WTC11 (cell line): ENCODE measurements at regions of chr20 and their contacts with region 1.

Region 1: GRCh38 chr20:50929299-50930138 is 1.7 kb downstream of the ADNP start:
- DNase-seq: peak; percentile 94
- ATAC-seq: peak; percentile 79
- H3K4me3 Mint-ChIP-seq: peak overlapping the region; percentile 88
- H3K27ac Mint-ChIP-seq: peak overlapping the region; percentile 97
- H3K4me1 Mint-ChIP-seq: peaks cover 57% of the 10 kb centered on the region
- H3K27me3 Mint-ChIP-seq: no peaks in the 10 kb centered on the region
- CTCF ChIP-seq: peak; percentile 68

Region 2: DNA sequence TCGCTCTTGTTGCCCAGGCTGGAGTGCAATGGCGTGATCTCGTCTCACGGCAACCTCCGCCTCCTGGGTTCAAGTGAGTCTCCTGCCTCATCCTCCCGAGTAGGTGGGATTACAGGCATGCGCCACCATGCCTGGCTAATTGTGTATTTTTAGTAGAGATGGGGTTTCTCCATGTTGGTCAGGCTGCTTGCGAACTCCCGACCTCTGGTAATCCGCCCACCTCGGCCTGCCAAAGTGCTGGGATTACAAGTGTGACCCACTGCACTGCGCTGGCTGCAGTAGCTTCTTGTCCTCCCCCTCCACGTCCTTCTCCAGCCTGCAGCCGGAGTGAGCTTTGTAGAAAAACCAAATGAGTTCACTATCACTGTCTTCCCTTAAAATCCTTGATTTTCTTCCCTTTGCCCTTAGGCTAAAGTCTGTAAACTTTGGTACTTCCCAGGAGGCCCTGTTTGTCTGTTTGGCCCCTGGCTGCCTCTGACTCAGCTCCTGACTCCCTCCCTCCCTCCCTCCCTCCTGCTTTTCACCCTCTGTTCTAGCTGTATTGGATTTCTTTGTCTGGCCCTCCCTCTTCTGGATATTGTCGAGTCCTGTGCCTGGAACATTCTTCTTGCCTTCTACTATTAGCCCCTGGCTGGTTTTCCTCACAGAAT is 185.3 kb before region 1 on chr20:
- CTCF ChIA-PET with region 1: no interaction called
- POLR2A ChIA-PET with region 1: no interaction called
- DNase-seq: no peak
- ATAC-seq: peak; percentile 69
- H3K4me3 Mint-ChIP-seq: no peak overlapping the region
- H3K27ac Mint-ChIP-seq: peak overlapping the region; percentile 97
- H3K4me1 Mint-ChIP-seq: peaks cover 61% of the 10 kb centered on the region
- H3K27me3 Mint-ChIP-seq: no peaks in the 10 kb centered on the region
- CTCF ChIP-seq: no peak

Region 3: DNA sequence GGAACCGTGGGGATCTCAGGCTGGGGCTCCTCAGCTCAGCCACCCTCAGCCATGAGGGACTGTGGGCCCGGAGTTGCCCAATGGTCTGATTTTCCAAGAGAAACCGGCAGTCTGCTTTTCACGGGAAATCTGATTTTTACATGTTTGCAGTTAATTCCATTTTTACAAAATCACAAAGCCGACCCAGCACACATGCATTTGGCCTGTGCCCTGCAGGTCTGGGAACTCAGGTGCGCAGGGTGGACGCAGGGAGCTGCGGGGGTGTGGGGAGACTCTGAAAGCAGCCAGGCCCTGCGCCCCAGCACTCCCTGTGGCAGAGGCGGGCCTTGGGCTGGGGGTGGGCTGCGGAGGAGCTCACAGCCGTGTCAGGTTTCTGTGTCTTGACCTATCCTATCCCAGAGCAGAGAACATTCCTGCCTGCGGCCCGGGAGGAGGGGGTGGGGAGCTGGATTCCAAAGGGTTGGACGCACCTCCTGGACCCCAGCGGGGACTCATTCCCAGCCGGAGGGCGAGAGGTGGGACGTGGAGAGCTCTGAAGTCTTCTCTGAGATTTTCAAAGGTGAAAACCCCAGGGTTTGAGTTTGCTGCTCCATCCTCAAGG is 58.9 kb before region 1 on chr20:
- CTCF ChIA-PET with region 1: interaction called, 19 read pairs
- POLR2A ChIA-PET with region 1: interaction called, 6 read pairs
- DNase-seq: peak; percentile 94
- ATAC-seq: peak; percentile 99
- H3K4me3 Mint-ChIP-seq: peak overlapping the region; percentile 75
- H3K27ac Mint-ChIP-seq: peak overlapping the region; percentile 97
- H3K4me1 Mint-ChIP-seq: peaks cover 36% of the 10 kb centered on the region
- H3K27me3 Mint-ChIP-seq: no peaks in the 10 kb centered on the region
- CTCF ChIP-seq: no peak

Region 4: DNA sequence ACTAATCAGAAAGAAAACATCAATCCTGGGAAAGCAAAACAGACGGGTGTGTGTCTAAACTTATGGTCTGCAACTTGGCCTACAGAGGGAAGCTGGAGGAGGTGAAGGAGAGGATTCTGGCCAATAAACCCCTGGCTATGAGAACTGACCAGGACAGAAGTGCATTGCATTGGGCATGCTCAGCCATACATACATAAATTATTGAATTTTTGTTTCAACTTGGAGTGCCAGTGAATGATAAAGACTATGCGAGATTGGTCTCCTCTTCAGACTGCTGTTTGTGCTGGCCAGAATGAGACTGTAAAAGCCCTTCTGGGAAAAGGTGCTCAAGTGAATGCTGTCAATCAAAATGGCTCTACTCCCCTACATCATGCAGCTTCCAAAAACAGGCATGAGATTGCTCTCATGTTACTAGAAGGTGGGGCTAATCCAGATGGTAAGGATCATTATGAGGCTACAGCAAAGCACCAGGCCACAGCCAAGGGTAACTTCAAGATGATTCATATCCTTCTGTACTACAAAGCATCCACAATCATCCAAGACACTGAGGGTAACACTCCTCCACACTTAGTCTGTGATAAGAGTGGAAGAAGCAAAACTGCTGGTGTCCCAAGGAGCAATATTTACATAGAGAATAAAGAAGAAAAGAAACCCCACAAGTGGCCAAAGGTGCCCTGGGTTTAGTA is 15.7 kb before region 1 on chr20:
- CTCF ChIA-PET with region 1: interaction called, 27 read pairs
- POLR2A ChIA-PET with region 1: interaction called, 4 read pairs
- DNase-seq: no peak
- ATAC-seq: no peak
- H3K4me3 Mint-ChIP-seq: no peak overlapping the region
- H3K27ac Mint-ChIP-seq: peak overlapping the region; percentile 73
- H3K4me1 Mint-ChIP-seq: peaks cover 76% of the 10 kb centered on the region
- H3K27me3 Mint-ChIP-seq: no peaks in the 10 kb centered on the region
- CTCF ChIP-seq: no peak

Region 5: GRCh38 chr20:50958615-50959542 is 29.4 kb after region 1 on chr20 and contains the start of gene MOCS3:
- CTCF ChIA-PET with region 1: interaction called, 13 read pairs
- POLR2A ChIA-PET with region 1: interaction called, 23 read pairs
- DNase-seq: peak; percentile 66
- ATAC-seq: peak; percentile 63
- H3K4me3 Mint-ChIP-seq: peak within 1 kb of the TSS; percentile 99
- H3K27ac Mint-ChIP-seq: peak within 1 kb of the TSS; percentile 95
- H3K4me1 Mint-ChIP-seq: peaks cover 22% of the 10 kb centered on the region
- H3K27me3 Mint-ChIP-seq: no peaks in the 10 kb centered on the region
- CTCF ChIP-seq: no peak
- total RNA-seq, gene MOCS3: 6.0 to 6.7 TPM (median 6.0 TPM) in 3 replicates